OCI-LY7 (cell line): ENCODE measurements at regions of chr6 and their contacts with region 1.

Region 1: GRCh38 chr6:43769526-43770416 is at the start of gene VEGFA:
- DNase-seq: peak; percentile 90
- H3K4me3 ChIP-seq: peak within 1 kb of the TSS; percentile 80
- H3K27ac ChIP-seq: peak within 1 kb of the TSS; percentile 65
- H3K4me1 ChIP-seq: peaks cover 30% of the 10 kb centered on the region
- CTCF ChIP-seq: peak; percentile 99
- total RNA-seq, gene VEGFA: 59.7 and 66.3 TPM in 2 replicates

Region 2: GRCh38 chr6:43667245-43668150 is 102.3 kb before region 1 on chr6:
- CTCF ChIA-PET with region 1: interaction called, 4 read pairs
- POLR2A ChIA-PET with region 1: interaction called, 3 read pairs
- intact Hi-C with region 1: loop called (anchors 1 kb)
- DNase-seq: peak; percentile 78
- H3K4me3 ChIP-seq: no peak overlapping the region
- H3K27ac ChIP-seq: no peak overlapping the region
- H3K4me1 ChIP-seq: peaks cover 10% of the 10 kb centered on the region
- CTCF ChIP-seq: peak; percentile 90

Region 3: GRCh38 chr6:43723737-43724295 is 46.0 kb before region 1 on chr6:
- CTCF ChIA-PET with region 1: interaction called, 5 read pairs
- POLR2A ChIA-PET with region 1: interaction called, 5 read pairs
- intact Hi-C with region 1: loop called (anchors 1 kb)
- DNase-seq: peak; percentile 86
- H3K4me3 ChIP-seq: no peak overlapping the region
- H3K27ac ChIP-seq: no peak overlapping the region
- H3K4me1 ChIP-seq: peaks cover 25% of the 10 kb centered on the region
- CTCF ChIP-seq: peak; percentile 86

Region 4: DNA sequence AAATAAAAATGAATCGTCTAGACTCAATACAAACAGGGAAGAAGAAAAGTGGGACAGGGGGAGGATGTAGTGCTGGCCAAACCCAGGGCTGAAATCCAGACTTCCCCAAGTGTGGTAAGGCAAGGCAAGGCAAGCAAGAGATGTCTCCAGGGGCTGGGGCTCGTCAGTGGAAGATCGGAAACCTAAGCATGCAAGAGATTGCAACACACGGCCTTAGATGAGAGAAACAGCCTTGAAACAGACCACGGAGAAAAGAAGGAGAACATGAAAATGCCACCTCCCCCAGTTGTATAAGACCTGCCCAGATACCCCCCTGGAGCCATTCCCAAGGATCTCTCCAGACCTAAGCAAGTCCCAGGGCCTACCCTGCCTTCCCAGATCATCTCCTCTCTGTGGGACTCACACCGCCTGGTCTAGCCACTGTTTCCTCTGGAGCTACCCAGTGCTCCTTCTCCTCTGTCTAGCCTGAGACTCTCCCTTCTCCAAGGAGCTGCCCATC is 20.3 kb after region 1 on chr6:
- CTCF ChIA-PET with region 1: no interaction called
- POLR2A ChIA-PET with region 1: no interaction called
- intact Hi-C with region 1: no loop called
- DNase-seq: no peak
- H3K4me3 ChIP-seq: no peak overlapping the region
- H3K27ac ChIP-seq: no peak overlapping the region
- H3K4me1 ChIP-seq: no peaks in the 10 kb centered on the region
- CTCF ChIP-seq: no peak

Region 5: DNA sequence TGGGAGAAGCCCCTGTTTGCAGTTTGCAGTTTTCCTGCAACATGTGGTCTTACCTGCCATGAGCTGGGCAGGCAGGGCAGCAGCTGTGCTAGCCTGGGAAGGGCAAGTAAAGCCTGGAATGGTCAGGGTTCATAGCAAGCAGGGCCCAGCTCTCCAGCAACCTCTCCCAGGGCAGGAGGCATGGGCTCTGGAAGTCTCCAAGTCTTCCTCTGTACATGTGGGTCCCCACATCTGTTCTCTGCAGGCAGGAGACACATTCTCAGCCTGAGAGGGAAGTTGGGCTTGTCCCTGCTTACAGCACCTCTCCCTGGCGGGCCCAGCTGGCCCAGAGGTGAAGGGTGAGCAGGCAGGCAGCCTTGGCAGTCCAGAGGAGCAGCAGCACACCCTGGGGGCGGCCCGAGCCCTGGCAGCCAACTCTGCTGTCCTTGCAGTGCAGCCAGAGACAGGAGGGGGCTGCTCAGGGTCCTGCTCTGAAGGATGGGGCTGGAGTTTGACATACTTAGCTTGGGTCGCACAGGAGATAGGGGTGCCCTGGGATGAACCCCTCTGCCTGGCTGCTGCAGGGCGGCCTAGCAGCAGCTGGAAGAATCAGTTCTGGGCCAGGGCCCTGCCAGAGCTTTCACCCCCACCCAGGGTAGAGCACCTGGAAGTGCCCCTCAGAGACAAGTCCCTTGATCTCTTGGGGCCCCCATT is 181.4 kb after region 1 on chr6:
- CTCF ChIA-PET with region 1: no interaction called
- POLR2A ChIA-PET with region 1: no interaction called
- intact Hi-C with region 1: loop called (anchors 5 kb)
- DNase-seq: peak; percentile 28
- H3K4me3 ChIP-seq: no peak overlapping the region
- H3K27ac ChIP-seq: no peak overlapping the region
- H3K4me1 ChIP-seq: no peaks in the 10 kb centered on the region
- CTCF ChIP-seq: peak; percentile 46

Region 6: GRCh38 chr6:44074439-44075136 is 304.8 kb after region 1 on chr6:
- CTCF ChIA-PET with region 1: no interaction called
- POLR2A ChIA-PET with region 1: no interaction called
- intact Hi-C with region 1: loop called (anchors 1 kb)
- DNase-seq: peak; percentile 88
- H3K4me3 ChIP-seq: peak overlapping the region; percentile 68
- H3K27ac ChIP-seq: no peak overlapping the region
- H3K4me1 ChIP-seq: peaks cover 46% of the 10 kb centered on the region
- CTCF ChIP-seq: peak; percentile 93